Activated B cell treated with CpG ODN at 0.5 μM for 24 hours (primary cell): ENCODE measurements at regions of chr11 and their contacts with region 1.

Region 1: DNA sequence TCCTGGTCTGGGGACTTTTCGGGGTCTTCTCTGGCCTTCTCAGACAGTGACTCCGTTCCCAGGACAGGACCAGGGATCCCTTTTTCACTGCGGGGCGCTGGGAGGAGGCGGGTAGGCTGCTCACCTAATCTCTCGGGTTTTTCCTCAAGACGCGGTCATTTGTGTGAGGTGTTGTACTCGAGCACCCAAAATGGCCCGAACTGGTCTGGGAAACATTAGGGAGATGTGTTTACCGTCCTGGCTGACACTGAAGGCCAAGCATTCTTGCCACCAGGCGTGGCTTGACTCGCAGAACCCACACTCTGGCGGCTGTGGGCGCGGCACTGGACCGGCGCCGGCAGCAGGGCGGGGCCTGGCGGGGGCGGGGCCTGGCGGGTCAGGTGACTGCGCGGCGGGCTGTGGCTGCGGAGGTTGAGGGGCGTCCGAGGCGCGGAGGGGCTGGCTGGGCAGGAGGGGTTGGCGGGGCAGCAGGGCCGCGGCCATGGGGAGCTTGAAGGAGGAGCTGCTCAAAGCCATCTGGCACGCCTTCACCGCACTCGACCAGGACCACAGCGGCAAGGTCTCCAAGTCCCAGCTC is at the start of gene SWAP70:
- DNase-seq: peak; percentile 97
- ATAC-seq: peak; percentile 83
- H3K4me3 Mint-ChIP-seq: peak within 1 kb of the TSS; percentile 96
- H3K27ac Mint-ChIP-seq: peak within 1 kb of the TSS; percentile 97
- H3K4me1 Mint-ChIP-seq: peaks cover 73% of the 10 kb centered on the region
- H3K27me3 Mint-ChIP-seq: no peaks in the 10 kb centered on the region
- CTCF ChIP-seq: no peak
- total RNA-seq, gene SWAP70: 277 and 288 TPM in 2 replicates

Region 2: DNA sequence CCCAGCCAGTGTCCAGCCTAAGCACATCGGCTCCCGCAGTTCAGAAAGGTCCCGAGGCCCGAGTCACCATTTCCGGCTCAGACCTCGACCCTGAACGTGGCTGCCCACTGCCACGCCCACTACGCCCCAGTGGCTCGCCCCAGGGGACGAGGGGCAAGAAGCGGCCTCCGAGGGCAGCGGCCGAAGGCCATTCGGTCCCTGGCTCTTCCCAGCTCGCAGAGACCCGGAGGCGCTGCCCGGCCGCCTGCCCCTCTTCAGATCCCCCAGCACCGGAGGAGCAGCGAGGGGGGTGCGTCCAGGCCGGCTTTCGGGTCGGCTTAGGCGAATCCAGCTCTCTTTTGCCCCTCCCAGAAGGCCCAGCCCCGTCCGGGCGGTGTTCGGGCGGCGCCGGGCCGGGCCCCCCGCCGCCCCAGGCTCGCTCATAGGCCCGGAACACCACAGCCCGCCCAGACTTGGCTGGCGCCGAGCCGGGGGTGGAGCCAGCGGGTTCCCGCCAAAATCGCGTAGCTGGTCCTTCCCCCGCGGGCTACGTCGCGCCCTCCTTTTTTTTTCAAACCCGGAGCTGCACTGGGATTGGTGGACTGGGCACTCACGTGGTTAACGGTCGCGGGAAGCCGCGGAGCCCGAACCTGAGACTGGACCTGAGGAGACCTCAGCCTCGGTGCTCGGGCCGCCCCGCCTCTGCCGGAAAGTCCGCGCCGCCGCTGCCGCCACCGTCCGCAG is 90.6 kb before region 1 on chr11 and contains the start of gene WEE1:
- CTCF ChIA-PET with region 1: no interaction called
- POLR2A ChIA-PET with region 1: interaction called, 15 read pairs
- intact Hi-C with region 1: loop called (anchors 1 kb)
- DNase-seq: peak; percentile 97
- ATAC-seq: peak; percentile 90
- H3K4me3 Mint-ChIP-seq: peak within 1 kb of the TSS; percentile 95
- H3K27ac Mint-ChIP-seq: peak within 1 kb of the TSS; percentile 85
- H3K4me1 Mint-ChIP-seq: peaks cover 69% of the 10 kb centered on the region
- H3K27me3 Mint-ChIP-seq: no peaks in the 10 kb centered on the region
- CTCF ChIP-seq: no peak
- total RNA-seq, gene WEE1: 29.4 and 33.7 TPM in 2 replicates

Region 3: GRCh38 chr11:9619753-9620365 is 43.9 kb before region 1 on chr11:
- CTCF ChIA-PET with region 1: no interaction called
- POLR2A ChIA-PET with region 1: interaction called, 99 read pairs
- intact Hi-C with region 1: loop called (anchors 1 kb)
- DNase-seq: no peak
- ATAC-seq: no peak
- H3K4me3 Mint-ChIP-seq: peak overlapping the region; percentile 73
- H3K27ac Mint-ChIP-seq: peak overlapping the region; percentile 88
- H3K4me1 Mint-ChIP-seq: peaks cover 73% of the 10 kb centered on the region
- H3K27me3 Mint-ChIP-seq: no peaks in the 10 kb centered on the region
- CTCF ChIP-seq: no peak

Region 4: GRCh38 chr11:9643751-9644150 is 20.0 kb before region 1 on chr11:
- CTCF ChIA-PET with region 1: no interaction called
- POLR2A ChIA-PET with region 1: interaction called, 40 read pairs
- intact Hi-C with region 1: loop called (anchors 1 kb)
- DNase-seq: no peak
- ATAC-seq: peak; percentile 67
- H3K4me3 Mint-ChIP-seq: peak overlapping the region; percentile 28
- H3K27ac Mint-ChIP-seq: peak overlapping the region; percentile 77
- H3K4me1 Mint-ChIP-seq: peaks cover 69% of the 10 kb centered on the region
- H3K27me3 Mint-ChIP-seq: no peaks in the 10 kb centered on the region
- CTCF ChIP-seq: no peak

Region 5: GRCh38 chr11:9703280-9703679 is 39.5 kb after region 1 on chr11:
- CTCF ChIA-PET with region 1: no interaction called
- POLR2A ChIA-PET with region 1: interaction called, 4 read pairs
- intact Hi-C with region 1: loop called (anchors 5 kb)
- DNase-seq: no peak
- ATAC-seq: peak; percentile 30
- H3K4me3 Mint-ChIP-seq: peak overlapping the region; percentile 45
- H3K27ac Mint-ChIP-seq: peak overlapping the region; percentile 78
- H3K4me1 Mint-ChIP-seq: peaks cover 68% of the 10 kb centered on the region
- H3K27me3 Mint-ChIP-seq: no peaks in the 10 kb centered on the region
- CTCF ChIP-seq: no peak

Region 6: DNA sequence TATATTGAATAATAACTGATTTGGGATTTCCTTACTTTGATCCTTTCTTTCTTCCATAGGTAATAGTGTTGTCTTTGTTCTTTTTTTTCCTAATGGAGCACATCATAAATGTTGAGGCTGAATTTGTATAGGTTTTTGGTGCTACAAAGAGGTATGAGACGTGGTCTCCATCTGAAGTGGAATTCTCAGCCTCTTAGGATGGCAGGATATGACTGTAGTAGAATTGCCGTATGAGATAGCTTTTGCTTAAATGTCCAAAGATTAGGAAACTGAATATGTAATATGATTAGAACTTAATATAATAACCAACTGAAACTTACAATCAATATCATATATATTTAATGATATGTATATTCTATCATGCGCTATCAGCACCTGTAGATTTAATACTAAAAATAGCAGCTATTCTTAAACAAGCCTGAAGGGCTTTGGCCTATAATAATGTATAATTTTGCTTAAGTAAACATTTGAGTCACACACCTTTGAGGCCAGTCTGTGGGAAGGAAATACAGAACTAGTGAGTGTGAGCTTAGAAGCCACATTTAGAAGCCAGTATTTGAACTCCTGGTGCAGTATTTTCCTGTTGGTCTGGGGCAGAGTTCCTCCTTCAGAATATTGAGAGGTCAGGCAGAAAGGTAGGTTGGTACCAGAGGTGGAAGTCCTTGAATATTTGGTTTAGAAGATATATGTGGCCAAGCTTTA is 62.7 kb after region 1 on chr11:
- CTCF ChIA-PET with region 1: no interaction called
- POLR2A ChIA-PET with region 1: interaction called, 38 read pairs
- intact Hi-C with region 1: no loop called
- DNase-seq: no peak
- ATAC-seq: peak; percentile 35
- H3K4me3 Mint-ChIP-seq: peak overlapping the region; percentile 47
- H3K27ac Mint-ChIP-seq: peak overlapping the region; percentile 84
- H3K4me1 Mint-ChIP-seq: peaks cover 82% of the 10 kb centered on the region
- H3K27me3 Mint-ChIP-seq: no peaks in the 10 kb centered on the region
- CTCF ChIP-seq: no peak

Region 7: DNA sequence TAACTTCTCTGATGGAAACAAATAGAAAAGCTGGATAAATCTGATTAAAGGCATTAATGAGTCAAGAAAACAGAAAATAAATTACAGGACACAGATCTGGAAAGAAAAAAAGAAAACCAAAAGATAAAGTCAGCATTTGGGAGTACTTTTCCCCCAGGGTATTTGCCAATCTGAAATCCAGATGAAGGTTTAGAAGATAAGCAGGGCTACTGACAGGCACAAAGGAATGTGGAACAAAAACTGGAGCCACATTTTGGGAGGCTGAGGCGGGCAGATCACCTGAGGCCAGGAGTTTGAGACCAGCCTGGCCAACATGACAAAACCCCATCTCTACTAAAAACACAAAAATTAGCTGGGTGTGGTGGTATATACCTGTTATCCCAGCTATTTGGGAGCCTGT is 573.1 kb after region 1 on chr11:
- CTCF ChIA-PET with region 1: no interaction called
- POLR2A ChIA-PET with region 1: no interaction called
- intact Hi-C with region 1: no loop called
- DNase-seq: no peak
- ATAC-seq: no peak
- H3K4me3 Mint-ChIP-seq: no peak overlapping the region
- H3K27ac Mint-ChIP-seq: no peak overlapping the region
- H3K4me1 Mint-ChIP-seq: no peaks in the 10 kb centered on the region
- H3K27me3 Mint-ChIP-seq: peaks cover 2% of the 10 kb centered on the region
- CTCF ChIP-seq: no peak